Endothelial cell of umbilical vein (primary cell): ENCODE measurements at regions of chr7 and their contacts with region 1.

Region 1: GRCh38 chr7:38858259-38859165 is 50.5 kb downstream of the VPS41 start:
- DNase-seq: peak; percentile 63
- H3K4me3 ChIP-seq: no peak overlapping the region
- H3K27ac ChIP-seq: no peak overlapping the region
- H3K4me1 ChIP-seq: no peaks in the 10 kb centered on the region
- H3K27me3 ChIP-seq: no peaks in the 10 kb centered on the region
- CTCF ChIP-seq: no peak
- POLR2A ChIP-seq: no peak

Region 2: GRCh38 chr7:38806912-38807311 is 51.6 kb before region 1 on chr7:
- CTCF ChIA-PET with region 1: no interaction called
- POLR2A ChIA-PET with region 1: interaction called, 10 read pairs
- dilution Hi-C with region 1: no loop called
- intact Hi-C with region 1: no loop called
- DNase-seq: no peak
- H3K4me3 ChIP-seq: no peak overlapping the region
- H3K27ac ChIP-seq: no peak overlapping the region
- H3K4me1 ChIP-seq: no peaks in the 10 kb centered on the region
- H3K27me3 ChIP-seq: no peaks in the 10 kb centered on the region
- CTCF ChIP-seq: no peak
- POLR2A ChIP-seq: no peak